ENCODE measurements at regions of chrX and their contacts with region 1.

Region 1: GRCh38 chrX:117291760-117292159 is 824.9 kb downstream of the KLHL13 start:
- DNase-seq: no peak
- H3K4me3 ChIP-seq: no peak overlapping the region
- H3K4me3 Mint-ChIP-seq: no peak overlapping the region
- H3K27ac Mint-ChIP-seq: no peak overlapping the region
- H3K4me1 ChIP-seq: no peaks in the 10 kb centered on the region
- H3K4me1 Mint-ChIP-seq: no peaks in the 10 kb centered on the region
- H3K27me3 ChIP-seq: no peaks in the 10 kb centered on the region
- H3K27me3 Mint-ChIP-seq: no peaks in the 10 kb centered on the region
- CTCF ChIP-seq: no peak

Region 2: DNA sequence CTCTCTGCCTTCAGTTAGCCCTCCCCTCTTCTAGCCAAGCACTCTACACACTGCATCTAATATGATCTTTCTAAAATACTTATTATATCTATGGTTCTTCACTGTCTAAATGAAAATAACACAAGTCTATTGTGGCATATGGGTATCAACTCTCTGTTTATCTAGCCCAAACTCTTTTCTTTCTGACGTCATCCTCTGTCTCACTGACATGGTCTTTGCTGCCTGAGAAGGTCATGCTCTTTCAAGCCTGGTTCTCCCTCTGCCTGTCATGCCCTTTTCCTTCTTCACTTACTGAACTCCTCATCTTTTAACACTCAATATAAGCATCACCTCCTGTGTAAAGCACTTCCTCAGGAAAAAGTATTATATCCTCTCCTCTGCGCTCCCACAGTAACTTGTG is 156.8 kb before region 1 on chrX:
- CTCF ChIA-PET with region 1: no interaction called
- POLR2A ChIA-PET with region 1: no interaction called
- intact Hi-C with region 1: no loop called
- DNase-seq: no peak
- H3K4me3 ChIP-seq: no peak overlapping the region
- H3K4me3 Mint-ChIP-seq: no peak overlapping the region
- H3K27ac Mint-ChIP-seq: no peak overlapping the region
- H3K4me1 ChIP-seq: no peaks in the 10 kb centered on the region
- H3K4me1 Mint-ChIP-seq: peaks cover 7% of the 10 kb centered on the region
- H3K27me3 ChIP-seq: no peaks in the 10 kb centered on the region
- H3K27me3 Mint-ChIP-seq: no peaks in the 10 kb centered on the region
- CTCF ChIP-seq: no peak

Region 3: DNA sequence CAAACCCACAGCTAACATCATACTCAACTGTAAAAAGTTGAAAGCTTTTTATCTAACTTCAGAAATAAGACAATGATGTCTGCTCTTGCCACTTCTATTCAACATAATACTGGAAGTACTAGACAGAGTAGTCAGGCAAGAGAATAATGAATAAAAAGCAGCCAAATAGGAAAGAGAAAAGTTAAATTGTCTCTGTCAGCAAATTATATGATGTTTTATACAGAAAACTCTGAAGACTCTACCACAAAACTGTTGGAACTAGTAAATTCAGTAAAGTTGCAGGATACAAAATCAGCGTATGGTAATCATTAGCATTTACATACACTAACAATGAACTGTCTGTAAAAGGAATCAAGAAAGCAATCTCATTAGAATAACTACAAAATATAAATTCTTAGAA is 76.1 kb before region 1 on chrX:
- CTCF ChIA-PET with region 1: no interaction called
- POLR2A ChIA-PET with region 1: no interaction called
- intact Hi-C with region 1: no loop called
- DNase-seq: no peak
- H3K4me3 ChIP-seq: no peak overlapping the region
- H3K4me3 Mint-ChIP-seq: no peak overlapping the region
- H3K27ac Mint-ChIP-seq: no peak overlapping the region
- H3K4me1 ChIP-seq: no peaks in the 10 kb centered on the region
- H3K4me1 Mint-ChIP-seq: no peaks in the 10 kb centered on the region
- H3K27me3 ChIP-seq: no peaks in the 10 kb centered on the region
- H3K27me3 Mint-ChIP-seq: no peaks in the 10 kb centered on the region
- CTCF ChIP-seq: no peak

Region 4: DNA sequence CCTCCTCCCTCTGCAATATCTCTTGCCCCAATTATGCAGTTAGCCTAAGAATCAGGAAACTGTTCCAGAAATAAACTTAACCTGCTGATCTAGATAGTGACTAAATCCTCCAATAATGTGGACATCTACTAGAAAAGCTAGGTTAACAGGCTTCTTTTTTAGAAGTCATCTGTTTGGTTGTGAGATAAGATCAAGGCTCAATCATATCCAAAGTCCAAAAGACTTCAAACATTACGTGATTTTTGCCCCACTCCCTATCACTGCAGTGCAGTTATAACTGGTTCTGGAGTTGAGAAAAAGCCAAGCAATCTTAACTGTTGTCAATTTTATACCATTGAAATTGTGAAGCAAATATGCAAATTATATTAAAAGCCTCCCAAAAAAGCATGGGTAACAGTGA is 43.4 kb after region 1 on chrX:
- CTCF ChIA-PET with region 1: no interaction called
- POLR2A ChIA-PET with region 1: no interaction called
- intact Hi-C with region 1: loop called (anchors 1 kb)
- DNase-seq: peak in 1 of 2 experiments; percentile 30
- H3K4me3 ChIP-seq: no peak overlapping the region
- H3K4me3 Mint-ChIP-seq: peak overlapping the region; percentile 2
- H3K27ac Mint-ChIP-seq: peak overlapping the region; percentile 34
- H3K4me1 ChIP-seq: peaks cover 19% of the 10 kb centered on the region
- H3K4me1 Mint-ChIP-seq: peaks cover 13% of the 10 kb centered on the region
- H3K27me3 ChIP-seq: no peaks in the 10 kb centered on the region
- H3K27me3 Mint-ChIP-seq: no peaks in the 10 kb centered on the region
- CTCF ChIP-seq: no peak

Region 5: DNA sequence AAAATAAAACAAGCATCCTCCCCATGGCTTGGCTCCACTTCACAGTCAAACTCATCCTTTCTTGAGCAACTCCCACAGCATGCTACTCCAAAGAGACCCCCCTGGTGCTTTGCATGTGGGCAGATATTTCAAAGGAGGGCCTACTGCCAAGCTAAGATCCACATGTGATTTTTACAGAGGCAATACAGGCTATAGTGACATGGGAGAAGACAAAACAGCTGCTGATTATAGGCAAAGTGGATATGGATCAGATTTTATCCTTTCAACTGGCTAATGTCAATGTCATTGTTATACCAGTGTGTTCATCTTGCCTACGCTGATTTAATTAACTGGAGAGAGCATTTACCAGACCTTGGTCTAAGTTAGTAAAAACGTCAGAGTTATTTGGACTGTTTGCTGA is 496.6 kb after region 1 on chrX:
- CTCF ChIA-PET with region 1: no interaction called
- POLR2A ChIA-PET with region 1: no interaction called
- intact Hi-C with region 1: no loop called
- DNase-seq: no peak
- H3K4me3 ChIP-seq: no peak overlapping the region
- H3K4me3 Mint-ChIP-seq: no peak overlapping the region
- H3K27ac Mint-ChIP-seq: no peak overlapping the region
- H3K4me1 ChIP-seq: no peaks in the 10 kb centered on the region
- H3K4me1 Mint-ChIP-seq: no peaks in the 10 kb centered on the region
- H3K27me3 ChIP-seq: no peaks in the 10 kb centered on the region
- H3K27me3 Mint-ChIP-seq: no peaks in the 10 kb centered on the region
- CTCF ChIP-seq: no peak

Measured in Caco-2 (cell line).